ENCODE measurements at regions of chr5 and their contacts with region 1.

Region 1: GRCh38 chr5:2017540-2018389 is 135.0 kb upstream of the IRX4 start:
- DNase-seq: peak; percentile 63
- ATAC-seq: peak; percentile 64
- H3K4me3 Mint-ChIP-seq: no peak overlapping the region
- H3K27ac Mint-ChIP-seq: no peak overlapping the region
- H3K4me1 Mint-ChIP-seq: no peaks in the 10 kb centered on the region
- H3K27me3 Mint-ChIP-seq: peaks cover 8% of the 10 kb centered on the region
- CTCF ChIP-seq: peak; percentile 56

Region 2: GRCh38 chr5:1737790-1738405 is 279.9 kb before region 1 on chr5:
- CTCF ChIA-PET with region 1: no interaction called
- POLR2A ChIA-PET with region 1: no interaction called
- intact Hi-C with region 1: loop called (anchors 10 kb)
- DNase-seq: peak; percentile 64
- ATAC-seq: peak; percentile 88
- H3K4me3 Mint-ChIP-seq: no peak overlapping the region
- H3K27ac Mint-ChIP-seq: no peak overlapping the region
- H3K4me1 Mint-ChIP-seq: no peaks in the 10 kb centered on the region
- H3K27me3 Mint-ChIP-seq: peaks cover 9% of the 10 kb centered on the region
- CTCF ChIP-seq: peak; percentile 91

Region 3: DNA sequence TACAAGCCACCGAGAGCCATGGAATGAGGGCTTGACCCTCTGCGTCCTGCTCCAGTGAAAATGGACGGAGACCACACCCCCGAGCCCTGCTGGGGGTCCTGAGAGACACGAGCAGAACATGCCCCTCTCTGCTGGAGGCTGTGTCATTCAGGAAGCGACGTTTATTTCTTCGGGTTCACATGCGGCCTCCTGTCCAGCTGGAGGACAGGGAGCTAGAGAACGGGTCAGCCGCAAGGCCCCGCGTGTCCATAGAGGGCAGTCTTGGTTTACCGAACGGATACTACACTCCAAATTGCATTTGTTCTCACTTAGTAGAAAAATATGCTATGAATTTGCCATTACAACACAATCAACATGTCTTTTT is 254.2 kb before region 1 on chr5:
- CTCF ChIA-PET with region 1: no interaction called
- POLR2A ChIA-PET with region 1: no interaction called
- intact Hi-C with region 1: loop called (anchors 10 kb)
- DNase-seq: peak; percentile 56
- ATAC-seq: no peak
- H3K4me3 Mint-ChIP-seq: no peak overlapping the region
- H3K27ac Mint-ChIP-seq: no peak overlapping the region
- H3K4me1 Mint-ChIP-seq: no peaks in the 10 kb centered on the region
- H3K27me3 Mint-ChIP-seq: peaks cover 11% of the 10 kb centered on the region
- CTCF ChIP-seq: peak; percentile 58

Region 4: GRCh38 chr5:2038321-2039179 is 20.8 kb after region 1 on chr5:
- CTCF ChIA-PET with region 1: no interaction called
- POLR2A ChIA-PET with region 1: no interaction called
- intact Hi-C with region 1: no loop called
- DNase-seq: peak; percentile 71
- ATAC-seq: peak; percentile 95
- H3K4me3 Mint-ChIP-seq: peak overlapping the region; percentile 50
- H3K27ac Mint-ChIP-seq: no peak overlapping the region
- H3K4me1 Mint-ChIP-seq: no peaks in the 10 kb centered on the region
- H3K27me3 Mint-ChIP-seq: peaks cover 19% of the 10 kb centered on the region
- CTCF ChIP-seq: peak; percentile 100

Measured in activated CD8-positive, alpha-beta T cell treated with anti-CD3 and anti-CD28 coated beads for 36 hours (primary cell).